PC-9 (cell line): ENCODE measurements at regions of chr15 and their contacts with region 1.

Region 1: DNA sequence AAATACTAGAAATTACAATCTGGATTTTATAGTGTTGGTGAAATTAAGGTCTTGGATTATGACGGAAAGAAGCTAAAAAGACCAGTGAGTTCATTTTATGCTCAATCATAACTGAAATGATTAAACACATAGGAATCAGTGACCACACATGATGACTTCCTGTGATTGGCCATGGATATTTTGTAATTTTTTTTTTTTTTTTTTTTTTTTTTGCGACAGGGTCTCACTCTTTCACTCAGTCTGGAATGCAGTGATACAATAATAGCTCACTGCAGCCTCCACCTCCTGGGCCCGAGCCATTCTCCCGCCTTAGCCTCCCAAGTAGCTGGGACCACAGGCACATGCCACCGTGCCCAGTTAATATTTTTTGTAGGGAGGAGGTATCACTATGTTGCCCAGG is 47.4 kb downstream of the PAQR5 start:
- DNase-seq: no peak
- H3K4me3 ChIP-seq: no peak overlapping the region
- H3K27ac ChIP-seq: no peak overlapping the region
- H3K4me1 ChIP-seq: no peaks in the 10 kb centered on the region; the same call in 1 of the 2 replicates
- H3K27me3 ChIP-seq: no peaks in the 10 kb centered on the region
- CTCF ChIP-seq: no peak

Region 2: DNA sequence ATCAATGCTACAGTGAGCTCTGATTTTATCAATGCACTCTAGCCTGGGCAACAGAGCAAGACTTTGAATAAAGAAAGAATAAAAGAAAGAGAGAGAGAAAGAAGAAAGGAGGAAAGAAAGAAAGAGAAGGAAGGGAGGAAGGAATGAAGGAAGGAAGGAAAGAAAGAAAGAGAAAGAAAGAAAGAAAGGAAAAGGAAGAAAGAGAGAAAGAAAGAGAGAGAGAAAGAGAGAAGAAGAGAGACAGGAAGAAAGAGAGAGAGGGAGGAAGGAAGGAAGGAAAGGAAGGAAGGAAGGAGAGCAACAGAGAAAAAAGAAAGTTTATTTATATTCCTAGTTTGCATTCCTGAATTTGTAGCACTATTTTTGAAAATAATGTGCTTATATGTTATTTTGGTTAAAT is 861.9 kb before region 1 on chr15:
- CTCF ChIA-PET with region 1: interaction called, 20 read pairs
- POLR2A ChIA-PET with region 1: no interaction called
- intact Hi-C with region 1: no loop called
- DNase-seq: no peak
- H3K4me3 ChIP-seq: no peak overlapping the region
- H3K27ac ChIP-seq: no peak overlapping the region
- H3K4me1 ChIP-seq: no peaks in the 10 kb centered on the region
- H3K27me3 ChIP-seq: peaks cover 33% of the 10 kb centered on the region
- CTCF ChIP-seq: no peak

Region 3: DNA sequence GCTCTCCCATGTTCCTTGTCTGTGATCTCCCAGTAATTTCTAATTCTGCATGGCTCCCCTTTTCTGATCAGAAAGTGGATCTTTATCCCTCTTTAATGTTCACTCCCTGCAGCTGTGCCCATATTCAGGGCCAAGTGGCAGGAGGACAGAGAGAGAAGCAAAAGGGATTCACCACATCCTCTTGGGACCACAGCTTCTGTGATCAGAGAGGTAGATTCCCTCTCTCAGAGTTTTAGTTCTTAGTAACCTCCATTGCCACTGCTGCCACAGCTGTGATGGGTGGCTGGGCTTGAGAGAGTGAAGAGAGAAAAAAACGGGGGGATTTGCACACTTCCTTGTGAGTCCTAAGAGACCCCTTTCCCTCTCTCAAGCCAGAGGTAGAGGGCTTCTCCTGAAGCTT is 136.5 kb before region 1 on chr15:
- CTCF ChIA-PET with region 1: no interaction called
- POLR2A ChIA-PET with region 1: interaction called, 26 read pairs
- intact Hi-C with region 1: no loop called
- DNase-seq: no peak
- H3K4me3 ChIP-seq: no peak overlapping the region
- H3K27ac ChIP-seq: no peak overlapping the region
- H3K4me1 ChIP-seq: no peaks in the 10 kb centered on the region
- H3K27me3 ChIP-seq: no peaks in the 10 kb centered on the region
- CTCF ChIP-seq: no peak